ENCODE measurements at regions of chr2 and their contacts with region 1.

Region 1: GRCh38 chr2:47272031-47272864 is 117.1 kb upstream of the STPG4 start:
- DNase-seq: peak; percentile 38 to 62 (median 59)
- H3K4me3 ChIP-seq: peak overlapping the region; percentile 22 to 67 (median 47)
- H3K4me3 Mint-ChIP-seq: peak overlapping the region; percentile 73 to 90
- H3K27ac ChIP-seq: peak overlapping the region in 1 of 2 donors; percentile 60
- H3K27ac Mint-ChIP-seq: peak overlapping the region in 6 of 7 donors; percentile 23 to 88 (median 74)
- H3K4me1 ChIP-seq: peaks cover 34 to 35% of the 10 kb centered on the region in 2 donors
- H3K4me1 Mint-ChIP-seq: peaks cover 45% of the 10 kb centered on the region
- H3K27me3 ChIP-seq: no peaks in the 10 kb centered on the region
- H3K27me3 Mint-ChIP-seq: peaks cover 0 to 3% (median 1%) of the 10 kb centered on the region in 3 donors
- CTCF ChIP-seq: peak; percentile 100

Region 2: DNA sequence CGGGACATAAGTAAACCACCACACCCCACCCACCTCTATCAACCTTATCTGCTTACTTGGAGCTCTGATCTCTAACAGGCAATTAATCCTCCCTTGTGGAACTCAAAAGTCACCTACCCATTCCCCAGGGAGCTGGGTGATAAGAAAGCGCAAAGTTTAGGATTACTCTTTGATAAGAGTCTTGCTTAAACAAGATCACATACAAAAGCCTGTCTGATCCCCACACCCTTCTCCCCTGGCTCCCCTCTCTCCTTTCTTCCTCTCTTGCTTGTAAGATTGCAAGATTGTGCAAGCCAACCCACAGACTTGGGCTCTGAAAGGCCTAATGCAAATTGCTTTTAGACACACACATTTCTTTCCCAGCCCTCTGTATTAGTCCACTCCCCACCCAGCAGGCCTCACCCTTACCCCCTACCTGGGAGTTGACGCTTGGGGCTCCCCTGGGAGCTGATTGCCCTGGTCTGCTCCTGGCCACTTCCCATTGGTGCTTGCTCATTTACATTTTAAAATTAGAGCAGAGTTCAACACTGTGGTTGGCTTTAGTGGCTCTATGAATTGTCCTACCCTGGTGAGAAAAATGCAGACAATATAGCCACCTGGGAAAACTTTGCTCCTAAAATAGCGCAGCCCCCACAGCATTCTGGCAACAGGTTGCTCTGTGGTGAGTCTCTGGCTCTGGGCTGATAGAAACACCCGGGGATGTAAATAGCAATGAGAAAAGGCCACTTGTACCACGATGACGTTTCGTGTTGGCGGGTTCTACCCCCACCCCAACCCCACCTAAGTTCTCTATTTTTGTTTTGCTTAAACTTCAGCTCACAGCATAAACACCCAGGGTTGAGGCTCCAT is 37.9 kb after region 1 on chr2:
- intact Hi-C with region 1: loop called in 1 of 2 experiments (anchors 5 kb)
- DNase-seq: peak; percentile 58 to 78 (median 60)
- H3K4me3 ChIP-seq: peak overlapping the region in 1 of 3 experiments; percentile 50
- H3K4me3 Mint-ChIP-seq: peak overlapping the region; percentile 44 to 76
- H3K27ac ChIP-seq: peak overlapping the region; percentile 87 to 94
- H3K27ac Mint-ChIP-seq: peak overlapping the region; percentile 91 to 98 (median 97)
- H3K4me1 ChIP-seq: peaks cover 63 to 70% of the 10 kb centered on the region in 2 donors
- H3K4me1 Mint-ChIP-seq: peaks cover 73% of the 10 kb centered on the region
- H3K27me3 ChIP-seq: no peaks in the 10 kb centered on the region
- H3K27me3 Mint-ChIP-seq: no peaks in the 10 kb centered on the region
- CTCF ChIP-seq: no peak

Region 3: DNA sequence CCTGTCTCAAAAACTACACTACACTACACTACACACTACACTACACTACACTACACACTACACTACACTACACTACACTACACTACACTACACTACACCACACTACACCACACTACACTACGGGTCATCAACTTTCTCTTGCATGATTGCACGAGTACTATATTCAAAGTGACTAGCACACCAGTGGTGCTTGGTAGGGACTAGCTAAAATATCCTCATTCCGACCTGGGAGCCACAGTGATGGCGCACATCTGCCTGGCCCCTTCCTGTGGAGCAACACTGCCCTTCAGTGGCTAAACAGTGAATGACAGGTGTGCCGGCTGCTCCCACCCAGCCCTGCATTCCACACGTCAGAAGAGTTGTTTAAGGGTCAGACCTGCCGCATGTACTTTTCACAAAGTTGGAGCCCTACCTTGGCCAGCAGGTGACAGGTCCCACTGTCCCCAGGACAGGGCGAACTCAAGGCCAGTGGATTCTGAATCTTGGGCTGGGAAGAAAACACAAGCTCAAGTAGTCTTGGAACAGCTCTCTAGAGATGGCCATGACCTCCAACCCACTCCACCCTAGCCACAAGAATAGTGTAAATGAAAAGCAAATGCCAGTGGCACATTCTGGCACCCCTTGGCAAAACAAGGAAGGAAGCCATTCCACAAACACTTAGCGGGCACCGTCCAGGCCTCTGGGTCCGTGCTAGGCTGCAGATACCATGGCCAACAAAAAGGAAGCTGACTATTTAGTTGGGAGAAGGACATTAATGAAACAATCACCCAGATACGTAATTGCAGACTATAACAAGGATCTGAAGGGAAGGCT is 51.0 kb after region 1 on chr2:
- intact Hi-C with region 1: loop called in 1 of 2 experiments (anchors 5 kb)
- DNase-seq: peak; percentile 66 to 80 (median 73)
- H3K4me3 ChIP-seq: no peak overlapping the region
- H3K4me3 Mint-ChIP-seq: no peak overlapping the region
- H3K27ac ChIP-seq: peak overlapping the region in 1 of 2 donors; percentile 1
- H3K27ac Mint-ChIP-seq: no peak overlapping the region
- H3K4me1 ChIP-seq: peaks cover 0 to 8% of the 10 kb centered on the region in 2 donors
- H3K4me1 Mint-ChIP-seq: no peaks in the 10 kb centered on the region
- H3K27me3 ChIP-seq: no peaks in the 10 kb centered on the region
- H3K27me3 Mint-ChIP-seq: peaks cover 0 to 3% (median 3%) of the 10 kb centered on the region in 3 donors
- CTCF ChIP-seq: peak; percentile 97

Measured in CD14-positive monocyte (primary cell).